Heart right ventricle (tissue), 16 donors: ENCODE measurements at regions of chrX and their contacts with region 1.

Region 1: GRCh38 chrX:22406201-22406737 is 133.6 kb downstream of the CBLL2 start:
- DNase-seq: no peak
- ATAC-seq: no peak
- H3K4me3 ChIP-seq: no peak overlapping the region
- H3K27ac ChIP-seq: no peak overlapping the region
- H3K4me1 ChIP-seq: no peaks in the 10 kb centered on the region
- H3K27me3 ChIP-seq: peaks cover 0 to 7% (median 0%) of the 10 kb centered on the region in 7 donors
- CTCF ChIP-seq: no peak

Region 2: DNA sequence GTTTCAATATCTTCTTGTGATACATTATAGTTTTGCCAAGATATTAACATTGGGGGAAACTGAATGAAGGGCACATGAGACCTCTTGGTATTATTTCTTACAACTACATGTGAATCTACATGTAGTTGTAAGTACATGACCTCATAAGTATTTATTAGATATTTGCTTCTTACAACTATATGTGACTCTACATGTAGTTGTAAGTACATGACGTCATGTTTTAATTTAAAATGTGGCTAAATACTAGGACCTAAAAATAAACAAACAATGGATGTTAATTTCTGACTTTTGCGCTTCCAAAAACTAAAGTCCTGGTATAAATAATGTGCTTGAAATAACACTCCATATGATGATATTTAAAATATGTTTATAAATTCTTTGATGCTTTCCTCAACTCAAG is 56.7 kb after region 1 on chrX:
- intact Hi-C with region 1: loop called in 1 of 10 experiments (anchors 5 kb)
- DNase-seq: no peak
- ATAC-seq: no peak
- H3K4me3 ChIP-seq: no peak overlapping the region
- H3K27ac ChIP-seq: no peak overlapping the region
- H3K4me1 ChIP-seq: no peaks in the 10 kb centered on the region
- H3K27me3 ChIP-seq: no peaks in the 10 kb centered on the region
- CTCF ChIP-seq: no peak

Region 3: DNA sequence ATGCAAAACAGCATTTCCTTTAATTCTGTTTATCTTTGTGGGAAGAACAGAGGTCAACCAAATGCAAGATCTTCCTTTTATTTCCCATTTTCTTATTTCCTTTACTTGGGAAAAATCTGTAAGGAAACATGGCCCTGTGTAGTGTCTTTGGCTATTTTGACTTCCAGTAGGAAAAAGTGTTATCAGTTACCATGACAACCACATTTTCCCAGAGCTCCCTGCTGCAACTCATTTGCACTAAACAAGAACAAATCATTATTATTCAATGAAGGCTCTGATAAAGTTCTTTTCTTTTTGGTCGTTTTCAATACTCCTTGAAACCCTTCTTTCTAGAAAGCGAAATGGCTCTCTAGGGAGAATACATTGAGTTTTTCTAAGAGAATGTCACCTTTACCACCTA is 476.3 kb after region 1 on chrX:
- intact Hi-C with region 1: no loop called
- DNase-seq: no peak
- ATAC-seq: no peak
- H3K4me3 ChIP-seq: no peak overlapping the region
- H3K27ac ChIP-seq: no peak overlapping the region
- H3K4me1 ChIP-seq: no peaks in the 10 kb centered on the region
- H3K27me3 ChIP-seq: no peaks in the 10 kb centered on the region
- CTCF ChIP-seq: no peak